ENCODE measurements at regions of chr6 and their contacts with region 1.

Region 1: GRCh38 chr6:130215526-130215925 is 7.2 kb downstream of the SAMD3 start:
- DNase-seq: peak; percentile 86
- H3K4me3 Mint-ChIP-seq: peak overlapping the region; percentile 76
- H3K27ac Mint-ChIP-seq: peak overlapping the region; percentile 60
- H3K4me1 Mint-ChIP-seq: peaks cover 40% of the 10 kb centered on the region
- H3K27me3 Mint-ChIP-seq: no peaks in the 10 kb centered on the region

Region 2: GRCh38 chr6:129828229-129828628 is 387.3 kb before region 1 on chr6:
- intact Hi-C with region 1: no loop called
- DNase-seq: no peak
- H3K4me3 Mint-ChIP-seq: no peak overlapping the region
- H3K27ac Mint-ChIP-seq: no peak overlapping the region
- H3K4me1 Mint-ChIP-seq: no peaks in the 10 kb centered on the region
- H3K27me3 Mint-ChIP-seq: peaks cover 16% of the 10 kb centered on the region

Region 3: DNA sequence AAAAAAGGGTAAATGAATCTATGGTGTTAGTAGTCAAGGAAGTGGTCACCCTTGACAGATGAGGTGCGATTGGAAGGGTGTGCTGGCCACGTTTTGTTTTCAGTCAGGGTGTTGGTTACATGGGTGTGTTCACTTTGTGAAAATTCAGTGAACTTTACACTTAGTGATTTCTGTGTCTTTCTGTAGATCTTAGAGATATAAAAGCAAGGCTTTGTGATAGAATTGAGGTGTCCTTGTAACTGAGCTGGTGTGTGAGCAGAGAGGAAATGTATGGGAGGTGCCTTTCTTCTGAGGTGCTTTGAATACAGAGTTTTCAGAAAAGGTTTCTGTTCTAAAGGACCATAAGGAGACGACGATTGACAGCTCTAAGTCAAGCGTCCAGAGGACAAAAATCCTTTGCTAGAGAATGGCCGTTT is 83.2 kb before region 1 on chr6:
- intact Hi-C with region 1: loop called (anchors 2 kb)
- DNase-seq: peak; percentile 92
- H3K4me3 Mint-ChIP-seq: peak overlapping the region; percentile 66
- H3K27ac Mint-ChIP-seq: peak overlapping the region; percentile 93
- H3K4me1 Mint-ChIP-seq: peaks cover 62% of the 10 kb centered on the region
- H3K27me3 Mint-ChIP-seq: no peaks in the 10 kb centered on the region

Region 4: DNA sequence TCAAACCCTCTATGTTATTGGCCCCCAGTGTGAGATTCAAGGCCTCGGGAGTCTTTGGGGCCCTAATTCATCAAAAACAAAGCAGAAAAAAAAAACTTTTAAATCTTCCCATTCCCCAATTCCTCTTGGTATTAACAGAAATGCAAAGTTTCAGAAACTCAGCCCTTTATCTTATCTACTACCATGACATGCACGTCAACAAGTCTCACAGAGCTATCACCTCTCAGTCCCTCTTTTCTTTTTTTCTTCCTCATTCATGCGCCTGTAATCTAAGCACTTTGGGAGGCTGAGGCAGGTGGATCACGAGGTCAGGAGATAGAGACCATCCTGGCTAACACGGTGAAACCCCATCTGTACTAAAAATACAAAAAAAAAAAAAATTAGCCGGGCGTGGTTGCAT is 15.5 kb before region 1 on chr6:
- intact Hi-C with region 1: loop called (anchors 2 kb)
- DNase-seq: no peak
- H3K4me3 Mint-ChIP-seq: no peak overlapping the region
- H3K27ac Mint-ChIP-seq: no peak overlapping the region
- H3K4me1 Mint-ChIP-seq: peaks cover 14% of the 10 kb centered on the region
- H3K27me3 Mint-ChIP-seq: no peaks in the 10 kb centered on the region

Measured in activated CD4-positive, alpha-beta T cell treated with anti-CD3 and anti-CD28 coated beads, Interleukin-2, amount 10 ng/mL, durations not matched to agents 24 days and 14 days (primary cell).